ENCODE measurements at regions of chr5 and their contacts with region 1.

Region 1: GRCh38 chr5:133423618-133424282 is 188.6 kb downstream of the FSTL4 start:
- DNase-seq: peak; percentile 49
- H3K4me3 ChIP-seq: no peak overlapping the region
- H3K27ac ChIP-seq: no peak overlapping the region
- H3K4me1 ChIP-seq: peaks cover 17% of the 10 kb centered on the region
- H3K27me3 ChIP-seq: no peaks in the 10 kb centered on the region
- CTCF ChIP-seq: peak; percentile 92

Region 2: DNA sequence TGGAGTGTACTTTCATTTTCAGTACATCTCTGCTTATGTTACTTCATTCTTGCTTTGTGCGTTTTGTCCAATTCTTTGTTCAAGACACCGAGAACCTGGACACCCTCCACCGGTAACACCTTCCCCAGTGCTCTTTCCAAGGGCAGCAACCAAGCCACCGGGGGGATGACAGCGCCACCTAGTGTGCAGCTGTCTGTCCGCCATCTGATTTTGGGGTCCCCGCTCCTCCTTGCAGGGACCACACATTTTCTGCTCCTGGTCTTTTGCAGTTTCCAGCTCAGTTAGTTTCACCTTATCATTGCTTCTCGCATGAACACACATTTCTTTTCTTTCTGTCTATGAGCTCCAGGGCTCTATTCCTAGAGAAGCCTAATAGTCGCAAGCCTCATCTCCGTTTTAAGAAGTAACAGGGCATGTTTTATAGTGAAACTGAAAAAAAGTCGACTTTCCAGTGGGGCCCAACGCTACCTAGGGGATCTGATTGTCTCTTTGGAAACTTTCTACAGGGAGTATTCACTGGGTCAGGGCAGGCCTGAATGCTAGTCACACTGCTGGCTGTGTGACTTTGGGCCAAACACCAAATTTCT is 36.5 kb after region 1 on chr5:
- CTCF ChIA-PET with region 1: interaction called, 4 read pairs
- POLR2A ChIA-PET with region 1: no interaction called
- intact Hi-C with region 1: loop called (anchors 2 kb)
- DNase-seq: peak; percentile 44
- H3K4me3 ChIP-seq: no peak overlapping the region
- H3K27ac ChIP-seq: no peak overlapping the region
- H3K4me1 ChIP-seq: no peaks in the 10 kb centered on the region
- H3K27me3 ChIP-seq: no peaks in the 10 kb centered on the region
- CTCF ChIP-seq: peak; percentile 91

Region 3: DNA sequence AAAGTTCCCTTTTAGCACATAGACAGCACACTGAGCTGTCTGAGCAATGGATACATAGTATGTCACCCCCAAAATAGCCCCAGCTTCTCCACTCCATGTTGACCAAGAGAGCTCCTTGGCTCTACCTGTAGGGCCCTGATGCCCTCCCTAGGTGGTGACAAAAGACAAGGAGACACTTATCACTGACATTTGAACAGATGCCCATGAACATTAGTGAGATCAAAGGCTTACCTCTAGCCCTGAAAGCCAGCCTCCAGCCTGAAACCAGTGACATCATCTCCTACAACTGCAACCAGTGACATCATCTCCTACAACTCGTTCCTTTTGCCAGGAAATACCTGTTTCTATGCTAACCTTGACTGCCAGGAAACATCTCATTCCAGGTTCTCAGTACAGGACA is 65.9 kb after region 1 on chr5:
- CTCF ChIA-PET with region 1: no interaction called
- POLR2A ChIA-PET with region 1: no interaction called
- intact Hi-C with region 1: no loop called
- DNase-seq: no peak
- H3K4me3 ChIP-seq: no peak overlapping the region
- H3K27ac ChIP-seq: no peak overlapping the region
- H3K4me1 ChIP-seq: no peaks in the 10 kb centered on the region
- H3K27me3 ChIP-seq: no peaks in the 10 kb centered on the region
- CTCF ChIP-seq: no peak

Region 4: GRCh38 chr5:133610489-133611356 is 187.0 kb after region 1 on chr5:
- CTCF ChIA-PET with region 1: interaction called, 3 read pairs
- POLR2A ChIA-PET with region 1: no interaction called
- intact Hi-C with region 1: loop called (anchors 5 kb)
- DNase-seq: peak; percentile 46
- H3K4me3 ChIP-seq: peak overlapping the region; percentile 43
- H3K27ac ChIP-seq: no peak overlapping the region
- H3K4me1 ChIP-seq: peaks cover 10% of the 10 kb centered on the region
- H3K27me3 ChIP-seq: peaks cover 73% of the 10 kb centered on the region
- CTCF ChIP-seq: peak; percentile 58

Region 5: GRCh38 chr5:133868946-133869518 is 445.3 kb after region 1 on chr5:
- CTCF ChIA-PET with region 1: interaction called, 4 read pairs
- POLR2A ChIA-PET with region 1: no interaction called
- intact Hi-C with region 1: loop called (anchors 5 kb)
- DNase-seq: peak; percentile 89
- H3K4me3 ChIP-seq: no peak overlapping the region
- H3K27ac ChIP-seq: peak overlapping the region; percentile 91
- H3K4me1 ChIP-seq: peaks cover 76% of the 10 kb centered on the region
- H3K27me3 ChIP-seq: no peaks in the 10 kb centered on the region
- CTCF ChIP-seq: peak; percentile 95